ENCODE measurements at regions of chr6 and their contacts with region 1.

Region 1: GRCh38 chr6:28060405-28060804 is 20.0 kb upstream of the ZNF165 start:
- DNase-seq: no peak
- ATAC-seq: no peak
- H3K4me3 Mint-ChIP-seq: no peak overlapping the region
- H3K27ac Mint-ChIP-seq: no peak overlapping the region
- H3K4me1 Mint-ChIP-seq: no peaks in the 10 kb centered on the region
- H3K27me3 Mint-ChIP-seq: peaks cover 12% of the 10 kb centered on the region
- CTCF ChIP-seq: no peak

Region 2: GRCh38 chr6:27957516-27957915 is 102.9 kb before region 1 on chr6:
- CTCF ChIA-PET with region 1: no interaction called
- POLR2A ChIA-PET with region 1: no interaction called
- intact Hi-C with region 1: loop called (anchors 10 kb)
- DNase-seq: no peak
- ATAC-seq: no peak
- H3K4me3 Mint-ChIP-seq: no peak overlapping the region
- H3K27ac Mint-ChIP-seq: no peak overlapping the region
- H3K4me1 Mint-ChIP-seq: no peaks in the 10 kb centered on the region
- H3K27me3 Mint-ChIP-seq: peaks cover 7% of the 10 kb centered on the region
- CTCF ChIP-seq: no peak

Region 3: DNA sequence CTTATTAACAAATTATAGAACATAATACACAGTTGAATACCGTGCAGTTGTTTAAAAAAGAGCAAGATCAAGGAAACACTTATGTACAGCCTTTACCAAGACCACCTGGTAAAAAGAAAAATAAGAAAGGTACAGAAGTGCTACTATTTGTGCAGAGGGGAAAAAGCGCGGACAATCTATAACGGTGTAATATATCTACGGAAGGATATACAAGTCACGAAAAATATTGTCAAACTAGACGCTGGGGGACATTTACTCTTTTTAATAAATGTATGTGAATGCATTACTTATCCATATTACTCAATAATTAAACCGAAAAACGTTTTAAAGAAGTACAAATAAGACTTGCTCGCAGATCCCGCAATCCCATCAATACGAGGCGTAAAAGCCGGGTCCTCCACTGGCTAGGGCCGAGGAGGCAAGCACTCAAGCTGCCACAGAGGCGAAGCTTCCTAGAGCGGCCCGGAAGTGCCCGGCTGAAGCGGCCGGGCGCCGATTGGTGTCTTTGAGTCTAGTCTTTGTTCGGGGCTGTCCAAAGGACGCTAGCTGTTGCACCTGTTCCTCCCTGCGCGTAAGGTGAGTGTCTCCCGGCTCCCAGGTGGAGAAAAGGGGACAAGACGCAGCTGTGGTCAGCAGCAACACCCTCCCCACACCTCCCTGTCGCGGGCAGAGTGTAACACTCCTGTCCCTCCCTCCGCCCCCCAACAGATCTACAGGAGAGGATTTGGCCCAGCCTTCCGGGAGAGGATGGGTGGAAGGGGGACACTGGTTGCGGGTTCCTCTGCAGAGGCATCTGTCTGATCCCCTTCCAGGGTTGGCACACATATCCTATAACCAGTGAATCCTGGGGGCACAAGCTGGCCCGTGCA is 63.9 kb after region 1 on chr6 and contains the start of gene ZSCAN16:
- CTCF ChIA-PET with region 1: no interaction called
- POLR2A ChIA-PET with region 1: no interaction called
- intact Hi-C with region 1: no loop called
- DNase-seq: peak; percentile 72
- ATAC-seq: peak; percentile 96
- H3K4me3 Mint-ChIP-seq: peak within 1 kb of the TSS; percentile 97
- H3K27ac Mint-ChIP-seq: peak within 1 kb of the TSS; percentile 95
- H3K4me1 Mint-ChIP-seq: peaks cover 27% of the 10 kb centered on the region
- H3K27me3 Mint-ChIP-seq: no peaks in the 10 kb centered on the region
- CTCF ChIP-seq: no peak
- total RNA-seq, gene ZSCAN16: 10.6 and 12.6 TPM in 2 replicates

Measured in activated B cell treated with CpG ODN at 0.5 μM for 24 hours (primary cell).